Prostate gland (tissue), 2 donors: ENCODE measurements at regions of chr4 and their contacts with region 1.

Region 1: GRCh38 chr4:184745831-184746795 is 12.2 kb upstream of the CENPU start:
- DNase-seq: peak; percentile 92
- H3K4me3 ChIP-seq: peak overlapping the region in 1 of 2 donors; percentile 2
- H3K27ac ChIP-seq: peak overlapping the region; percentile 88 to 92
- H3K4me1 ChIP-seq: peaks cover 24% of the 10 kb centered on the region
- H3K27me3 ChIP-seq: no peaks in the 10 kb centered on the region
- CTCF ChIP-seq: peak; percentile 47 to 94 (median 86)
- POLR2A ChIP-seq: no peak

Region 2: GRCh38 chr4:184825896-184826690 is 80.0 kb after region 1 on chr4 and contains the start of gene ACSL1:
- intact Hi-C with region 1: loop called (anchors 5 kb)
- DNase-seq: peak; percentile 81
- H3K4me3 ChIP-seq: peak within 1 kb of the TSS; percentile 60 to 95
- H3K27ac ChIP-seq: peak within 1 kb of the TSS; percentile 93 to 94
- H3K4me1 ChIP-seq: peaks cover 2% of the 10 kb centered on the region
- H3K27me3 ChIP-seq: no peaks in the 10 kb centered on the region
- CTCF ChIP-seq: peak in 1 of 4 experiments; percentile 37
- POLR2A ChIP-seq: peak; percentile 76
- total RNA-seq, gene ACSL1: 71.7 to 157 TPM

Region 3: GRCh38 chr4:184983672-184984356 is 237.7 kb after region 1 on chr4:
- intact Hi-C with region 1: loop called (anchors 2 kb)
- DNase-seq: peak; percentile 44
- H3K4me3 ChIP-seq: no peak overlapping the region
- H3K27ac ChIP-seq: no peak overlapping the region
- H3K4me1 ChIP-seq: no peaks in the 10 kb centered on the region
- H3K27me3 ChIP-seq: no peaks in the 10 kb centered on the region
- CTCF ChIP-seq: peak in 3 of 4 experiments; percentile 39 to 53 (median 48)
- POLR2A ChIP-seq: no peak

Region 4: GRCh38 chr4:185096032-185096653 is 350.0 kb after region 1 on chr4:
- intact Hi-C with region 1: loop called (anchors 10 kb)
- DNase-seq: peak; percentile 37
- H3K4me3 ChIP-seq: no peak overlapping the region
- H3K27ac ChIP-seq: no peak overlapping the region
- H3K4me1 ChIP-seq: no peaks in the 10 kb centered on the region
- H3K27me3 ChIP-seq: no peaks in the 10 kb centered on the region
- CTCF ChIP-seq: peak in 3 of 4 experiments; percentile 62 to 77 (median 66)
- POLR2A ChIP-seq: no peak